Ascending aorta (tissue), 2 donors: ENCODE measurements at regions of chr1 and their contacts with region 1.

Region 1: DNA sequence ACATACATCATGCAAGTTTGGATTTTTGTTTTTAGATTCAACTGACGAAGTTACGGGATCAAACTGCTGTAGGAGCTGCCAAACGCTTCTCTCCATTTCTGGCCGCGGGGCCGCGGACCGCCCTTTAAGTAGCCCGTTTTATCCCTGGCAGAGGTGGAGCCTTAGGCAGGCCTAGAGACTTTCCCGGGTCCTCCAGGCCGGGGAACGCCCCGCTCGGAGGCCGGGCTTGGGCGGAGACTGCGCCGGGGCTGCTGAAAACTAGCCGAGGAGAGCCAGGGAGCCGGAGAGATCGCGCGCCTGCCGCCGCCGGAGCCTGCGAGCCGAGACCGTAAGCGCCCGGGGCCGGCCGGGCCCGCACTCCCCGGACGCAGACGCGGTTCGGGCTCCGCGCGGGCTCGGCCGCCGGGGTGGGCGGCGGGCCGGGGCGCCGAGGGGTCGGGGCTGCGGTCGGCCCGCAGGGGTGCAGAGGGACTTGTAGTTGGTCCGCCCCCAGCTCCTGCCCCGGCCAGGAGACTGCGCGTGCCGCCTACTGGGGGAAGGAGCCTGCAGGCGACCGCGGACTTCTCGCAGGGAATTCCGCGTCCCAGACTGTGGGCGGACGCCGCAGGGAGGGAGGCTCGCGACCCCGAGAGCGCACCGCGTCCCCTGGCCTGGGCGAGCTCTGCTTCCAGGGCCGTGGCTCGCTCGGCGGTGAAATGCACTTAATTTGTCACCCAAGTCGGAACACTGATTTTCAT is at the start of gene EPHX1:
- DNase-seq: peak; percentile 56 to 94
- H3K4me3 ChIP-seq: peak within 1 kb of the TSS; percentile 66 to 89
- H3K27ac ChIP-seq: peak within 1 kb of the TSS; percentile 84 to 90
- H3K4me1 ChIP-seq: peaks cover 19 to 32% of the 10 kb centered on the region in 2 donors
- H3K27me3 ChIP-seq: no peaks in the 10 kb centered on the region
- CTCF ChIP-seq: peak; percentile 33 to 43 (median 33)
- total RNA-seq, gene EPHX1: 127 TPM

Region 2: GRCh38 chr1:225845571-225846259 is 35.7 kb after region 1 on chr1:
- intact Hi-C with region 1: loop called (anchors 1 kb)
- DNase-seq: peak in 1 of 2 donors; percentile 89
- H3K4me3 ChIP-seq: no peak overlapping the region
- H3K27ac ChIP-seq: peak overlapping the region in 1 of 2 donors; percentile 35
- H3K4me1 ChIP-seq: peaks cover 0 to 2% of the 10 kb centered on the region in 2 donors
- H3K27me3 ChIP-seq: no peaks in the 10 kb centered on the region
- CTCF ChIP-seq: peak; percentile 71 to 85 (median 81)